ENCODE measurements at regions of chr2 and their contacts with region 1.

Region 1: DNA sequence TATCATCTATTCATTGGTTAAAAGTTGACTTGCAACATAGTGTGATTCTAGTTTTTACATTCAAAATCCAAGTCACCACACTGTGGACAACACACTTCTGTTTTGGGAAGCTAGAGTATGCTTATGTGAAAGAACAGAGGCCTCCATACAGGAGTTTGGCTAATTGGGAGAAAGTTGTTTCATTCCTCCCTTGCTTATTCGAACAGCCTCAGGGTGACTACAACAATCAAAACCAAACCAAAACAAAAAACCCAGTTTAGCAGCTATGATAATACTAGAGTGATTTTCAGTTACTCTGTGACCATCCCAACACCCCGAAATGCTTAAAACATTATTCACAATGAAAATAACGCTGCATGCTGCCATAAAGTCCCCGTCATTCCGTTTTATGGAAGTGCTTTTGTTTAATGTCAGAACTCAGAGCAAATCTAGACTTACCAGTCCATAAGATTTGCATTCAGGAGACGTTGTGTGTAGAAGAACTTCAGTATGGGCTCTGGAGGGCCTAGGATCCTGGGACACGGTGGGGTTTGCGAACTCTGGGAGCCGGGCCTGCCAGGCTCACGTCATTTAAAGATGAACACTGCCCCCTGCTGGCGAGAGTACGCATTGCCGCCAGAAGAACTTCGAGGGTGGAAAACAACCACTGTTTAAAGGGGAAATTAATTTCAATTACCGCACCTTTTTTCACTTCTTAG is 111.4 kb downstream of the FTCDNL1 start:
- DNase-seq: peak; percentile 59 to 69
- H3K4me3 ChIP-seq: no peak overlapping the region
- H3K27ac ChIP-seq: no peak overlapping the region
- H3K4me1 ChIP-seq: peaks cover 0 to 6% (median 0%) of the 10 kb centered on the region in 4 donors
- H3K27me3 ChIP-seq: peaks cover 0 to 19% of the 10 kb centered on the region in 2 donors
- CTCF ChIP-seq: peak; percentile 73 to 79

Region 2: GRCh38 chr2:198309673-198310280 is 1429.8 kb before region 1 on chr2:
- intact Hi-C with region 1: loop called (anchors 10 kb)
- DNase-seq: peak in 1 of 2 donors; percentile 32
- H3K4me3 ChIP-seq: no peak overlapping the region
- H3K27ac ChIP-seq: no peak overlapping the region
- H3K4me1 ChIP-seq: no peaks in the 10 kb centered on the region
- H3K27me3 ChIP-seq: peaks cover 0 to 22% of the 10 kb centered on the region in 2 donors
- CTCF ChIP-seq: peak; percentile 58 to 82